CD8-positive, alpha-beta T cell (primary cell): ENCODE measurements at regions of chr5 and their contacts with region 1.

Region 1: GRCh38 chr5:93582677-93583438 is at the start of gene NR2F1:
- DNase-seq: peak in 2 of 9 experiments; percentile 27 to 50
- ATAC-seq: no peak
- H3K4me3 ChIP-seq: no peak within 1 kb of the TSS
- H3K4me3 Mint-ChIP-seq: no peak within 1 kb of the TSS
- H3K27ac ChIP-seq: no peak within 1 kb of the TSS
- H3K27ac Mint-ChIP-seq: no peak within 1 kb of the TSS
- H3K4me1 ChIP-seq: peaks cover 47% of the 10 kb centered on the region
- H3K4me1 Mint-ChIP-seq: peaks cover 29% of the 10 kb centered on the region
- H3K27me3 ChIP-seq: peaks cover 71 to 72% of the 10 kb centered on the region in 2 experiments
- H3K27me3 Mint-ChIP-seq: peaks cover 49% of the 10 kb centered on the region
- CTCF ChIP-seq: no peak
- total RNA-seq, gene NR2F1: not detected

Region 2: GRCh38 chr5:93607367-93608258 is 24.8 kb after region 1 on chr5:
- CTCF ChIA-PET with region 1: interaction called, 4 read pairs
- POLR2A ChIA-PET with region 1: no interaction called
- intact Hi-C with region 1: loop called (anchors 2 kb)
- DNase-seq: peak in 3 of 9 experiments; percentile 33 to 72 (median 61)
- ATAC-seq: peak; percentile 73
- H3K4me3 ChIP-seq: no peak overlapping the region
- H3K4me3 Mint-ChIP-seq: no peak overlapping the region
- H3K27ac ChIP-seq: no peak overlapping the region
- H3K27ac Mint-ChIP-seq: no peak overlapping the region
- H3K4me1 ChIP-seq: peaks cover 6% of the 10 kb centered on the region
- H3K4me1 Mint-ChIP-seq: peaks cover 21% of the 10 kb centered on the region
- H3K27me3 ChIP-seq: peaks cover 65 to 81% of the 10 kb centered on the region in 2 experiments
- H3K27me3 Mint-ChIP-seq: peaks cover 85% of the 10 kb centered on the region
- CTCF ChIP-seq: peak; percentile 53

Region 3: GRCh38 chr5:93620487-93621326 is 37.8 kb after region 1 on chr5:
- CTCF ChIA-PET with region 1: no interaction called
- POLR2A ChIA-PET with region 1: interaction called, 3 read pairs
- intact Hi-C with region 1: loop called (anchors 5 kb)
- DNase-seq: peak; percentile 18 to 78 (median 58)
- ATAC-seq: peak; percentile 64
- H3K4me3 ChIP-seq: peak overlapping the region; percentile 48 to 61
- H3K4me3 Mint-ChIP-seq: peak overlapping the region; percentile 93
- H3K27ac ChIP-seq: peak overlapping the region in 1 of 2 experiments; percentile 8
- H3K27ac Mint-ChIP-seq: peak overlapping the region; percentile 84
- H3K4me1 ChIP-seq: peaks cover 21% of the 10 kb centered on the region
- H3K4me1 Mint-ChIP-seq: peaks cover 23% of the 10 kb centered on the region
- H3K27me3 ChIP-seq: no peaks in the 10 kb centered on the region
- H3K27me3 Mint-ChIP-seq: peaks cover 10% of the 10 kb centered on the region
- CTCF ChIP-seq: no peak

Region 4: DNA sequence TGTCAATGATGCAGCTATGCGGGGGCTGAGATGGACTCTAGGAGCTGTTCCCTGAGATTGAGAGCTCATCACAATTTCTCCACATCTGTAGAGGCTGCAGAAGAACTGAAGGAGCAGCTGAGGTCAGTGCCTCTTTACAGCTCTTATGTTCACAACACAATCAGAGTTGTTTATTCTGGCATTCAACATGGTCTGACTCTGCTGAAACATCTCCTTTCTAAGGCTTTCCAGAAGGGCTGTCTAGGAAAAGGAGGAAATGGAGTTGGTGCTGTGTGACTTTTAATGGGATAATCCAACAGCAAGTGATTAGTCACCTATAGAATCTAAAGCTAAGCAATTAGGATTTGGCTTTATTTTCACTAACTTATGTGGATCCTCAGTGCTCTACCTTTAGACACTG is 152.5 kb after region 1 on chr5:
- CTCF ChIA-PET with region 1: no interaction called
- POLR2A ChIA-PET with region 1: no interaction called
- intact Hi-C with region 1: no loop called
- DNase-seq: no peak
- ATAC-seq: no peak
- H3K4me3 ChIP-seq: no peak overlapping the region
- H3K4me3 Mint-ChIP-seq: no peak overlapping the region
- H3K27ac ChIP-seq: no peak overlapping the region
- H3K27ac Mint-ChIP-seq: no peak overlapping the region
- H3K4me1 ChIP-seq: no peaks in the 10 kb centered on the region
- H3K4me1 Mint-ChIP-seq: no peaks in the 10 kb centered on the region
- H3K27me3 ChIP-seq: no peaks in the 10 kb centered on the region
- H3K27me3 Mint-ChIP-seq: no peaks in the 10 kb centered on the region
- CTCF ChIP-seq: no peak

Region 5: DNA sequence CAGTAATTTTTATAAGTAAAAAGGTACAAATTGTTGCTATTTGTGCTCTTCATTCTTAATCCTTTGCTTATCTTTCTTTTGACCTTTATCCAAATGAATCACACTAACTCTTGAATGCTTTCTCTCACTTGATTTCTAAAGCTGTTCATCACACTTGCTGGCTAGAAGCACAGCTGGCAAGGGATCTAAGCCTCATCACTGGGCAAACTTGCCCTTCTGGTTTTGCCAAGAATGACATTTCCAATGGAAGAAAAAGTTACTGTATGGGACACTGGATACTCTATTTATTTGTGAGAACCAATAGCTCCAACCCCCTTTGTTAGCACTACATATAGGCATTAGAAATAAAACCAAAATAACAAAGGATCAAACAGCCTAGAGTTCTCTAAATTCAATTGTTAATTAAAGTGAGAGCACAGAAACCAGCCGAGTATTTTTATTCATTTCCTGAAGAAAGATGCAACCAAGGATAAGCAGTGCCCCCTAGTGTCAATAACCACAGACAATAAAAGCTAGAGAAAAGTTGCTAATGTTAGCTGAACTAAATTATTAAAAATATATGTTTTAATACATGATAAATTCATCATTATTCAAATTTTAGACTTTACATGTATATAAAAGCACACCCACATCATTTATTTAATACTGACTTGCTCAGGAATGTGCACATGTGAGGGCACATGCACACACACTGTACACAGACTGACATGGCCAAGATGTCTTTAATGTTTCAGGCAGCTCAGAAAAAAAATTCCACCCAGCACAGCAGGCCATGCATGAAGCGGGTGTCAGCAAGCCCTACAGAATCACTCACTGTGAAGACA is 218.3 kb after region 1 on chr5:
- CTCF ChIA-PET with region 1: interaction called, 9 read pairs
- POLR2A ChIA-PET with region 1: no interaction called
- intact Hi-C with region 1: loop called (anchors 1 kb)
- DNase-seq: peak in 4 of 9 experiments; percentile 15 to 65 (median 42)
- ATAC-seq: no peak
- H3K4me3 ChIP-seq: no peak overlapping the region
- H3K4me3 Mint-ChIP-seq: no peak overlapping the region
- H3K27ac ChIP-seq: no peak overlapping the region
- H3K27ac Mint-ChIP-seq: no peak overlapping the region
- H3K4me1 ChIP-seq: no peaks in the 10 kb centered on the region
- H3K4me1 Mint-ChIP-seq: no peaks in the 10 kb centered on the region
- H3K27me3 ChIP-seq: no peaks in the 10 kb centered on the region
- H3K27me3 Mint-ChIP-seq: no peaks in the 10 kb centered on the region
- CTCF ChIP-seq: peak; percentile 75

Region 6: GRCh38 chr5:93915142-93915553 is 332.3 kb after region 1 on chr5:
- CTCF ChIA-PET with region 1: no interaction called
- POLR2A ChIA-PET with region 1: no interaction called
- intact Hi-C with region 1: loop called (anchors 1 to 2 kb)
- DNase-seq: peak in 2 of 9 experiments; percentile 45 to 56
- ATAC-seq: no peak
- H3K4me3 ChIP-seq: no peak overlapping the region
- H3K4me3 Mint-ChIP-seq: no peak overlapping the region
- H3K27ac ChIP-seq: no peak overlapping the region
- H3K27ac Mint-ChIP-seq: no peak overlapping the region
- H3K4me1 ChIP-seq: no peaks in the 10 kb centered on the region
- H3K4me1 Mint-ChIP-seq: no peaks in the 10 kb centered on the region
- H3K27me3 ChIP-seq: no peaks in the 10 kb centered on the region
- H3K27me3 Mint-ChIP-seq: no peaks in the 10 kb centered on the region
- CTCF ChIP-seq: peak; percentile 67

Region 7: DNA sequence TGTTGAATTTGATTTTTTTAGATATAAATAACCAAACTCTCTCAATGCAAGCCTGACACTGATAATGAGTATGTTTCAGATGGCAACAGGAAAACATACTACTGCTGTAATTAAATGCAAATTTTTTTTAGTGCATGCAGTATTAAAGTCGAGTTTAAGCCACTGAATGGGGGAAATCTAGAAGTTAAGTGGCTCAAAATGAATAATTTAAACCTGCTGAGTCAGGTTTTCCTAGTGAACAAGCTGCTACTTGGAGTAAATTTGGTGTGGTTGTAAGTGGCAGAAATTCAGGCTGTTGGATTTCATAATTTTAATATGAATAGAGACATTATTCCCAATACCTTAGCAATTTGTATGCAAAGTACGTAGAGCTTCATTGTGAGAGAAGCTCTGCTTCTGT is 1157.4 kb after region 1 on chr5:
- CTCF ChIA-PET with region 1: no interaction called
- POLR2A ChIA-PET with region 1: no interaction called
- intact Hi-C with region 1: loop called in 1 of 2 experiments (anchors 5 kb)
- DNase-seq: no peak
- ATAC-seq: no peak
- H3K4me3 ChIP-seq: no peak overlapping the region
- H3K4me3 Mint-ChIP-seq: no peak overlapping the region
- H3K27ac ChIP-seq: no peak overlapping the region
- H3K27ac Mint-ChIP-seq: no peak overlapping the region
- H3K4me1 ChIP-seq: no peaks in the 10 kb centered on the region
- H3K4me1 Mint-ChIP-seq: no peaks in the 10 kb centered on the region
- H3K27me3 ChIP-seq: no peaks in the 10 kb centered on the region
- H3K27me3 Mint-ChIP-seq: peaks cover 3% of the 10 kb centered on the region
- CTCF ChIP-seq: no peak

Region 8: DNA sequence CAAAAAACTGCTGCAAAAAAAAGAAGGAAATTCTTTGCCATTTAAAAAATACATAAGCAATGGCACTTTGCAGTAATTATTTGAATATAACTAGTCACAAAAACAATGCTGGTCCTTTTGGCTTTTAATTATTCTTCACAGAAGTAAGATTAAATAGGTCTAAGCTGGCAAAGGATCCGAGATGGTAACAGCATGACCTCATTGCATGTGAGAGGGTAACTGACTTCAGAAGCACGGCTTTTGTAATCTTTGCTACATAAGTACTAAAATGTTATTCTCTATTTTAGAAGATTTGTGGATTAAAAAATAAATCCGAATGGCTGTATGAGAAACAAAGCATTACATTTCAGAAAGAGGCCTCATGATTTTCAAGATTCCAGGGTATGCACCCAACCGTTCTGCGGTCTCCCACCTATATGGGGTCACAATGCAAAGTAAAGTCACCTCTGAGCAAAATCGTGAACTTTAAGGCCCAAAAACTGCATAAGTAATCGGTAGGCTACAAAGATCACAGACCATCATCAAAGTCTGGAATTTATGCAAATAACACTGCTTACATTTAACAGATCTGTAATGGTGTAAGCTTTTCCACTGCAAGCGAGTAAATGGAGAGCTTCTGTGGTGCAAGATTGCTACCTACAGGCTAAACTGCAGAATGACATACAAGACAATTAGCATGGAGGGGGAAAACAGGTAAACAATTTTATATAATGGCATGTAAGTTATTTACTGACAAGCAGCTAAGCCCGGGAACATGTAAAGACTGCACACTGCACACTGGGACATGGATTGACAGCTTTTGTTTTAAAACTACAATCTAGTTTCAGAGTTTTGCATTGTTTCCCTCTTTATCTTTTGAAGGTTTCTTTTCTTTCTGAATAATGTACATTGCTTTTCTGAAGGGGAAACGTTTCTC is 1267.2 kb after region 1 on chr5:
- CTCF ChIA-PET with region 1: no interaction called
- POLR2A ChIA-PET with region 1: no interaction called
- intact Hi-C with region 1: loop called in 1 of 2 experiments (anchors 5 kb)
- DNase-seq: peak in 7 of 9 experiments; percentile 3 to 70 (median 25)
- ATAC-seq: peak; percentile 89
- H3K4me3 ChIP-seq: no peak overlapping the region
- H3K4me3 Mint-ChIP-seq: no peak overlapping the region
- H3K27ac ChIP-seq: no peak overlapping the region
- H3K27ac Mint-ChIP-seq: no peak overlapping the region
- H3K4me1 ChIP-seq: no peaks in the 10 kb centered on the region
- H3K4me1 Mint-ChIP-seq: no peaks in the 10 kb centered on the region
- H3K27me3 ChIP-seq: no peaks in the 10 kb centered on the region
- H3K27me3 Mint-ChIP-seq: no peaks in the 10 kb centered on the region
- CTCF ChIP-seq: peak; percentile 78